ENCODE measurements at regions of chr19 and their contacts with region 1.

Region 1: GRCh38 chr19:11435058-11435832 is at the starts of genes ODAD3 and PRKCSH:
- DNase-seq: peak; percentile 99
- ATAC-seq: peak; percentile 96
- H3K4me3 ChIP-seq: peak within 1 kb of the TSS; percentile 78 to 88 (median 81)
- H3K27ac ChIP-seq: peak within 1 kb of the TSS; percentile 71
- H3K4me1 ChIP-seq: peaks cover 20% of the 10 kb centered on the region
- H3K27me3 ChIP-seq: no peaks in the 10 kb centered on the region
- CTCF ChIP-seq: peak; percentile 87
- EP300 ChIP-seq: peak; percentile 18 to 20; a peak in 1 of 4 replicates
- POLR2A ChIP-seq: peak; percentile 86 to 88
- RAD21 ChIP-seq: 0 out of 2 replicates have a peak, but pooled peaks have one; percentile 19
- total RNA-seq, gene ODAD3: 0.04 TPM in 1 of 2 replicates, not detected in the other
- total RNA-seq, gene PRKCSH: 44.2 and 125 TPM in 2 replicates

Region 2: DNA sequence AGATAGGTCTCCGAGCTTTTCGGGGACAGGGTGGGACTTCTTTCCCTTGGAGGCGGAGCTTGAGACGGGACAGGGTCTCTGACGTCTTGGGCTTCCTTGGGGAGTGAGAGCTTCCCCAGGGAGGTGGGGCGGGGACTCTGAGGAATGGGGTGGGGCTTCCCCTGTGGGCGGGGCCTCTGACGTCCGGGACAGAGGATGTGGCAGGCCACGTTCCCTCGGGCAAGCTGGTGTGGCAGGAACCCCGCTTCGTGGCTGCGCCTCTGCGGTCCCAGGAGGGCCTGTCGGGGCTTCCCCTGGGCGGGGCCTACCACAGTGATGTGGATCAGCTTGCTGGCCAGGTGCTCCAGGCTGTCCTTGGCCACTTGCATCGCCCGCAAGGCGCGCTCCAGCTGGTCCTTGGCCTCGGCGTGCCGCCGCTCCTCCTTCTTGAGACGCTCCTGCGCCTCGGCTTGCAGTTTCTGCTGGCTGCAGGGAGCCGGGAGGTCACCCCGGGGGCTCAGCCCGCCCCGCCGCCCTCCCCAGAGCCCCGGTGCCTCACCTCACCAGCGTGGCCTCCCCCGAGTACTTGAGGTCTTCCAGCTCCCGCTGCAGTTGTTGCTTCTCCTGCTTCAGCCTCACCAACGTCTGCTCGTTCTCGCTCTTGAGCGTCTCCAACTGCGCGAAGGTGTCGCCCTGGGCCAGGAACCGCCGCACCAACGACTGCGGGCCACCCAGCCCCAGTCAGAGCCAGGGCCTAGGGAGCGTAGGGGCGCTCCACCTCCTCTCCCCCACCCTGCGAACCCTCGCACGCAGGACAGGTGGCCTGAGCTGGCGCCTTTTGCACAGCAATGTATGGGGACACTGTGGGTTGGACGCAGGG is 12.9 kb before region 1 on chr19:
- CTCF ChIA-PET with region 1: no interaction called
- POLR2A ChIA-PET with region 1: interaction called, 14 read pairs
- in situ Hi-C with region 1: no loop called
- intact Hi-C with region 1: no loop called
- DNase-seq: no peak
- ATAC-seq: no peak
- H3K4me3 ChIP-seq: peak overlapping the region in 2 of 3 experiments; percentile 24 to 69; a peak in 2 of 6 replicates
- H3K27ac ChIP-seq: no peak overlapping the region
- H3K4me1 ChIP-seq: peaks cover 51% of the 10 kb centered on the region
- H3K27me3 ChIP-seq: peaks cover 3 to 35% of the 10 kb centered on the region in 2 experiments; a peak in 4 of 5 replicates
- CTCF ChIP-seq: no peak
- EP300 ChIP-seq: no peak
- POLR2A ChIP-seq: no peak
- RAD21 ChIP-seq: no peak

Region 3: GRCh38 chr19:11473725-11474124 is 38.5 kb after region 1 on chr19:
- CTCF ChIA-PET with region 1: no interaction called
- POLR2A ChIA-PET with region 1: no interaction called
- in situ Hi-C with region 1: no loop called
- intact Hi-C with region 1: no loop called
- DNase-seq: no peak
- ATAC-seq: no peak
- H3K4me3 ChIP-seq: no peak overlapping the region
- H3K27ac ChIP-seq: no peak overlapping the region
- H3K4me1 ChIP-seq: 0 out of 2 replicates have a peak, but pooled peaks cover 1% of the 10 kb centered on the region
- H3K27me3 ChIP-seq: peaks cover 0 to 23% of the 10 kb centered on the region in 2 experiments; a peak in 3 of 5 replicates
- CTCF ChIP-seq: no peak
- EP300 ChIP-seq: no peak
- POLR2A ChIP-seq: no peak
- RAD21 ChIP-seq: no peak